PC-9 (cell line): ENCODE measurements at regions of chr18 and their contacts with region 1.

Region 1: GRCh38 chr18:40751186-40751585 is 1203.8 kb upstream of the PIK3C3 start:
- DNase-seq: no peak
- H3K4me3 ChIP-seq: no peak overlapping the region
- H3K27ac ChIP-seq: no peak overlapping the region
- H3K4me1 ChIP-seq: no peaks in the 10 kb centered on the region
- H3K27me3 ChIP-seq: no peaks in the 10 kb centered on the region
- CTCF ChIP-seq: no peak

Region 2: GRCh38 chr18:40738321-40738880 is 12.8 kb before region 1 on chr18:
- CTCF ChIA-PET with region 1: no interaction called
- POLR2A ChIA-PET with region 1: no interaction called
- intact Hi-C with region 1: loop called (anchors 2 kb)
- DNase-seq: no peak
- H3K4me3 ChIP-seq: no peak overlapping the region
- H3K27ac ChIP-seq: no peak overlapping the region
- H3K4me1 ChIP-seq: no peaks in the 10 kb centered on the region
- H3K27me3 ChIP-seq: no peaks in the 10 kb centered on the region
- CTCF ChIP-seq: no peak

Region 3: DNA sequence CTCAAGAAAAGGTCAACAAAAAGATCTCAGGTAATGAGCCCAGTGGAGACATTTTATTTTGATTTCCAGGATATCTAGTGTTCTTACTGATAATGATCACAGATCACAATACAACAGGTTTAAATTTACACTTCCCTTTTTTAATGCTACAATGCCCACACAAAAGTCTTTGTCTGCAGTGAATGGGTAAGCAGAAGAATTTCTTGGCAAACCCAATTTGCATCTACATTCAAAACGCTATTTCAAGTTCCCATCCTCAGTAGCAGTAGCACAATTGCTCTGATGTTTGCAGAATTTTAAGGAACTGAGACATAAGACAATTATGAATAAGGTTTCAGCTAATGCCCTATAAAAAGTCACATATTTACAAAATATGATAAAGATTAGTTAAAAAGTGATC is 274.5 kb after region 1 on chr18:
- CTCF ChIA-PET with region 1: no interaction called
- POLR2A ChIA-PET with region 1: no interaction called
- intact Hi-C with region 1: no loop called
- DNase-seq: no peak
- H3K4me3 ChIP-seq: no peak overlapping the region
- H3K27ac ChIP-seq: no peak overlapping the region
- H3K4me1 ChIP-seq: no peaks in the 10 kb centered on the region
- H3K27me3 ChIP-seq: no peaks in the 10 kb centered on the region
- CTCF ChIP-seq: no peak